WTC11 (cell line): ENCODE measurements at regions of chr2 and their contacts with region 1.

Region 1: DNA sequence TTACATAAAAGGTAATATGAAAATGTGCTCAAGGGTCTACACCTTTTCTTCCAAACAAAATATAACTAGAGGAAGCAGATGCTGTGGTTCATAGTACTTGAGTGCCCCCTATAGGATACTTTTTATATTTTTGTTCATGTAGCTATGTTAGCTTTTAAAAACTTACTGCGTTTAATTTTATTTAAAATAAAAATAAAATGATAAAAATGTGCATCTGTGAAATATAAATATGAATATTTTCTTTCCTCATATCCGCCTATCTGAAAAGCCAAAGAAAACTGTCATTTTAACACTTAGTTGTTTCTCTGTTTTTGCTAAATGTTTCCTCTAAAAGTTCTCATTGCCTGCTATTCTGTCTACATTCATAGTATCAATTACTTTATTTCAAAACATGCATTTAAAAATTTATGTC is 9.6 kb upstream of the LRP1B start:
- DNase-seq: no peak
- ATAC-seq: no peak
- H3K4me3 Mint-ChIP-seq: no peak overlapping the region
- H3K27ac Mint-ChIP-seq: no peak overlapping the region
- H3K4me1 Mint-ChIP-seq: no peaks in the 10 kb centered on the region; the same call in 1 of the 2 replicates
- H3K27me3 Mint-ChIP-seq: no peaks in the 10 kb centered on the region
- CTCF ChIP-seq: peak; percentile 58; the same call in 1 of the 2 replicates

Region 2: GRCh38 chr2:142130111-142131009 is 10.1 kb before region 1 on chr2:
- CTCF ChIA-PET with region 1: interaction called, 10 read pairs
- POLR2A ChIA-PET with region 1: no interaction called
- DNase-seq: peak; percentile 56
- ATAC-seq: peak; percentile 57
- H3K4me3 Mint-ChIP-seq: peak overlapping the region; percentile 87
- H3K27ac Mint-ChIP-seq: peak overlapping the region; percentile 80; the same call in 1 of the 2 replicates
- H3K4me1 Mint-ChIP-seq: peaks cover 26% of the 10 kb centered on the region
- H3K27me3 Mint-ChIP-seq: peaks cover 44% of the 10 kb centered on the region
- CTCF ChIP-seq: no peak